Sigmoid colon (tissue), 7 donors: ENCODE measurements at regions of chr12 and their contacts with region 1.

Region 1: DNA sequence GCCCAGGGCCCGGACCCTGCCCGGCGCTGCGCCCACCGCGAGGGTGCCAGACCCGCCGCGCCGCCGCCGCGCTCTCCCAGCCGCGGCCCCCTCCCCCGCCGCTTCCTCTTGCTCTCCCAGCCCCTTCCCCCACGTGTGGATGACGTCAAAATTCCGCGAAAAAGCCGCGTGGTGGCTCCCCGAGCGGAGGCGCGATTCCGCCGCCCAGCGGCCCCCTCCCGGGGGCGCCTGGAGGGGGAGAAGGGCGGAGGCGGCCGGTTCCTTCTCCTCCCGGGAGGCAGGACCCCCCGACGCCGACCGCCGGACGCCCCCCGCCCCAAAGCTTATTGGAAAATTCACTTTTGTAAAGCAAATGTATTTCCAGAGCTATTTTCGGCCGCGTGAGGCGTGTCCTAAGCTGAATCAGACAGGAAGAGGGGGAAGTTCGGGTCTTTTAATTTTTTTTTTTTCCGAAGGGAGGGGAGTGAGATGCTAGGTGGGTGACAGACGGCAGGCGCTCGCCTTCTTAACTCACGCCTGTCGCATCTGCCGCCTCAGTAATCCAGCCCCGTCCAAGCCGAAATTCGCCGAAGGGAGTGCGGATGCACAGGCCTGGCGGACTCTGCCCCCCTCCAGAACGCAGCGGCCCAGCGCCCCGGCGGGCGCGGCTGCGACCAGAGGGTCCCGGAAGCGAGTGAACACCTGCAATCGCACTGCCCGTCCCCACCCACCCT is 4.1 kb upstream of the CCND2 start:
- DNase-seq: peak; percentile 95
- H3K4me3 ChIP-seq: peak overlapping the region; percentile 44 to 91 (median 74)
- H3K27ac ChIP-seq: peak overlapping the region; percentile 93 to 99 (median 95)
- H3K4me1 ChIP-seq: peaks cover 0 to 37% (median 28%) of the 10 kb centered on the region in 4 donors
- H3K27me3 ChIP-seq: no peaks in the 10 kb centered on the region
- CTCF ChIP-seq: peak in 2 of 4 experiments; percentile 29
- EP300 ChIP-seq: peak in 2 of 4 donors; percentile 63 to 75
- POLR2A ChIP-seq: peak in 1 of 2 donors; percentile 69

Region 2: GRCh38 chr12:4164559-4165558 is 104.6 kb before region 1 on chr12:
- intact Hi-C with region 1: loop called (anchors 5 kb)
- DNase-seq: peak; percentile 75
- H3K4me3 ChIP-seq: peak overlapping the region; percentile 28 to 58 (median 50)
- H3K27ac ChIP-seq: peak overlapping the region; percentile 46 to 82 (median 68)
- H3K4me1 ChIP-seq: peaks cover 0 to 12% (median 9%) of the 10 kb centered on the region in 4 donors
- H3K27me3 ChIP-seq: no peaks in the 10 kb centered on the region
- CTCF ChIP-seq: no peak
- EP300 ChIP-seq: no peak
- POLR2A ChIP-seq: no peak

Region 3: DNA sequence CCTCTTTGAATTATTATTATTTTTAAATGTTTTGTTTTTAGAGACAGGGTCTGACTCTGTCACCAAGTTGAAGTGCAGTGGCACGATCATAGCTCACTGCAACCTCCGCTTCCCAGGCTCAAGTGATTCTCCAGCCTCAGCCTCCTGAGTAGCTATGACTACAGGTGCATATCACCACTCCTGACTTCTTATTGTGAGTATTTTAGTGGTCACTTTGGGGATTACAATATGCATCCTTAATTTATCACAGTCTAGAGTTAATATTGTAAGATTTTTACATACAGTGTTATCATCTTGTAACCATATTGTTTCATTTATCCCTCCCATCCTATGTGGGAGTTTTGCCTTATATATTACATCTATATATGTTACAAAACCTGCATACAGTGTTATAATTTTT is 96.7 kb after region 1 on chr12:
- intact Hi-C with region 1: no loop called
- DNase-seq: no peak
- H3K4me3 ChIP-seq: no peak overlapping the region
- H3K27ac ChIP-seq: no peak overlapping the region
- H3K4me1 ChIP-seq: no peaks in the 10 kb centered on the region
- H3K27me3 ChIP-seq: no peaks in the 10 kb centered on the region
- CTCF ChIP-seq: no peak
- EP300 ChIP-seq: no peak
- POLR2A ChIP-seq: no peak

Region 4: GRCh38 chr12:4421590-4422031 is 152.2 kb after region 1 on chr12:
- intact Hi-C with region 1: no loop called
- DNase-seq: no peak
- H3K4me3 ChIP-seq: no peak overlapping the region
- H3K27ac ChIP-seq: no peak overlapping the region
- H3K4me1 ChIP-seq: peaks cover 0 to 27% (median 20%) of the 10 kb centered on the region in 4 donors
- H3K27me3 ChIP-seq: no peaks in the 10 kb centered on the region
- CTCF ChIP-seq: peak in 2 of 4 experiments; percentile 36 to 51
- EP300 ChIP-seq: no peak
- POLR2A ChIP-seq: no peak